ENCODE measurements at regions of chr5 and their contacts with region 1.

Region 1: DNA sequence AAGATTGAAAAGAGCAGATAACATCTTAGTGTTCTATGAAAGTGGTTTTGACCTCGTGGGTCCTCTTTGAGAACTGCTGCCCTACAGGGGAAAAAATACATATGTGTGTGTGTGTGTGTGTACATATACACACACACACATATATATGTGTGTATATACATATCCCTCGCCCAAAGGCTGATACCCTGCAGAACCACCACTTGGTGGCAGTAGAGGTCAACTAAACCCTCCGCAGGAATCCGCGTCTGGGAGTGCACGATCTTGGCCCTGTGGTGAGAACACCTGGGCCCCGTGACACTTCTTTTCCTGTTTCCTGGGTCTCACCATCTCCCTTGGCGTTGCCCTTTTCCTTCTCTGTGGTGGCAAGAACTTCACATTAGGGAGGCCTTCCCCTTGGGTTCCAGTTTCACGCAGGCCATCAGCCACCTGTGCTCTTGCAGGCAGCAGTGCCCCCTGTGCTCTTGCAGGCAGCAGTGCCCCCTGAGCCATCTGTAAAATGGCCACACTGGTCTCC is 8.2 kb downstream of the IL9 start:
- DNase-seq: peak; percentile 73
- ATAC-seq: peak; percentile 95
- H3K4me3 ChIP-seq: peak overlapping the region; percentile 32 to 61 (median 40); a peak in 4 of 6 replicates
- H3K27ac ChIP-seq: no peak overlapping the region
- H3K4me1 ChIP-seq: peaks cover 10% of the 10 kb centered on the region
- H3K27me3 ChIP-seq: peaks cover 0 to 5% of the 10 kb centered on the region in 2 experiments; a peak in 2 of 5 replicates
- CTCF ChIP-seq: peak; percentile 93
- EP300 ChIP-seq: no peak
- POLR2A ChIP-seq: no peak
- RAD21 ChIP-seq: peak; percentile 95

Region 2: DNA sequence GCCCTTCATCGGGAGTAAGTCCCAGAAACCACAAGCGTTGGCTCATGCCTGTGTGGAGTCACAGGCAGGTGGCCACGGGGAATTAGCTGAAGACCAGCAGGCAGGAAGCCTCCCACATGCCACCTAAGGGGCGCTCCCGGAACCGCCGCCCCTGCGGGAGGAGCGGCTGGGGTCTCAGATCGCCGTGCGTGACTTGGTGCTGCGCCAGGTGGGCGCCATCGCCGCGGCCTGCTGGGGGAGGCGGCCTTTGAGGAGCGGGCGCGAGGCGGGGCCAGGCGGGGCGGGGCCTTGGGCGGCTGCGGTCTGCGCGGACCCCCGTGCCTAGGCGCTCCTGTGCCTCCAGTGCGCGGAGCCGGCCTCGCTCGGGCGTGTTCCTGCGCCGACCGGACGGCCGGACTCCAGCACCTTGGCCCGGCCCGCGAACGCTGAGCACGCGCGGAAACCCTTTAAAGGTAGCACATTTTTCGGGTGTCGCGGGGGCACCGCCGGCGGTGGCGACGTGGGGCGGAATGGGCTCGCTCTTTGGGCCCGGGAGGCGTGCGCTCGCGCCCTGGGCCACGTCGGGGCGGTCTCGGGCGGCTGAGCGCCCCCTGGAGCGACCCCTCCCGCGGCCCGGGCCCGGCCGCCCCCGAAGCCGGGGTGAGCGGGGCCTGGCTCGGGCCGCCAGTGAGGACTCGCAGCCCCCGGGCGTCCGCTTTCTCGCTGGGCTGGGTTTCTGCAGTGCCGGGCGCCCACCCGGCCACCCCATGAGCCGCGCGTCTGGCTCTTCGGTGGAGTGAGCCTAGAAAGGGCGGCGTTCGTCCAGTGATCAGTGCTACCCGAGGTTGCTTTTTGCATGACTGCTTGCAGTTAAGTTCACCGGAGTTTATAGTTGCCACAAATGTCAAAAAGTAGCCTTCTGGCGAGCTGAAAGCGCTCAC is 42.9 kb after region 1 on chr5:
- CTCF ChIA-PET with region 1: no interaction called
- POLR2A ChIA-PET with region 1: no interaction called
- in situ Hi-C with region 1: no loop called
- intact Hi-C with region 1: loop called (anchors 2 kb)
- DNase-seq: peak; percentile 68
- ATAC-seq: peak; percentile 91
- H3K4me3 ChIP-seq: peak overlapping the region; percentile 70 to 92 (median 81)
- H3K27ac ChIP-seq: peak overlapping the region; percentile 62
- H3K4me1 ChIP-seq: peaks cover 16% of the 10 kb centered on the region
- H3K27me3 ChIP-seq: peaks cover 0 to 4% of the 10 kb centered on the region in 2 experiments; a peak in 3 of 5 replicates
- CTCF ChIP-seq: peak; percentile 45
- EP300 ChIP-seq: no peak
- POLR2A ChIP-seq: peak; percentile 53 to 77
- RAD21 ChIP-seq: peak; percentile 18; the same call in 1 of the 2 replicates

Region 3: DNA sequence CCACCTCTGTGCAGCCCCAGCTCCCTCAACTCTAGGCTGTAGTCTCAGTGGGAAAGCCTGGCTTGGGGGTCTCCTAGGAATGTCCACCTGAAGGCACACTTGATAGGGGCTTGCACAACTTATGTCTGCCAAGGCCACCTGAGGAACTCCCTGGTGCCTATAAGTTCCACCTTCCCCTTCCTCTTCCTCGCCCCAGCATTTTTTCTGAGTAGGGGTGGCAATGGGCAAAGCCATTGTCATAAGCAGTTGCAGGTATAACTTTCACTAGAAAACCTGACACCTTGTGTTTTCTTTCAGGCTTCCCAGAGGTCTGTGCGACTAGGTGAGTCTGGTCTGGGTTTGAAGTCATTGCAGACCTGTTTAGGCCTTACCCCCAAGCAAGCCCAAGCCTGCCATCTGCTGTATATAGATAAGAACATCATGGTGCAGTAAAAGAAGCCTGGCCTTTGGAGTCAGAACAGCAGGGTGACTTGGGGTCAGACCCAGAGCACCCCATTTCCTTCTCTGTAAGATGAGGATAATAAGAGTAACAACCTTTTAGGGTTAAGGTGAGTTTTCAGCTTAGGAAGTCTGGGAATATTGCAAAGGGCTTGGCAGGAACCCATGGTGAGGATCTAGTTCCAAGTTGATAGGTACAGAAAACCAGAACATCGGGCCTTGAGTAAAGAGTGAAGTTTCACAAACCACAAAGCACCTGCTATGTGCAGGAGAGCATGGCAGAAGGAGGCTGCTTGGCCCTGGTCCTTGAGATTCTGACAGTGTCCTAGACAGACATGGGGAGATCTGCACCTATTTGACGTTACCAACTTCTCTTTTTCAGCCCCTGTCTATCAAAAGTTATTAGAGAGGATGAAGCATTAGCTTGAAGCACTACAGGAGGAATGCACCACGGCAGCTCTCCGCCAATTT is 175.2 kb after region 1 on chr5:
- CTCF ChIA-PET with region 1: interaction called, 12 read pairs
- POLR2A ChIA-PET with region 1: no interaction called
- in situ Hi-C with region 1: no loop called
- intact Hi-C with region 1: loop called (anchors 2 kb)
- DNase-seq: peak; percentile 69
- ATAC-seq: peak; percentile 14
- H3K4me3 ChIP-seq: no peak overlapping the region
- H3K27ac ChIP-seq: peak overlapping the region; percentile 28
- H3K4me1 ChIP-seq: peaks cover 58% of the 10 kb centered on the region
- H3K27me3 ChIP-seq: no peaks in the 10 kb centered on the region
- CTCF ChIP-seq: peak; percentile 70
- EP300 ChIP-seq: no peak
- POLR2A ChIP-seq: no peak
- RAD21 ChIP-seq: peak; percentile 83

Region 4: DNA sequence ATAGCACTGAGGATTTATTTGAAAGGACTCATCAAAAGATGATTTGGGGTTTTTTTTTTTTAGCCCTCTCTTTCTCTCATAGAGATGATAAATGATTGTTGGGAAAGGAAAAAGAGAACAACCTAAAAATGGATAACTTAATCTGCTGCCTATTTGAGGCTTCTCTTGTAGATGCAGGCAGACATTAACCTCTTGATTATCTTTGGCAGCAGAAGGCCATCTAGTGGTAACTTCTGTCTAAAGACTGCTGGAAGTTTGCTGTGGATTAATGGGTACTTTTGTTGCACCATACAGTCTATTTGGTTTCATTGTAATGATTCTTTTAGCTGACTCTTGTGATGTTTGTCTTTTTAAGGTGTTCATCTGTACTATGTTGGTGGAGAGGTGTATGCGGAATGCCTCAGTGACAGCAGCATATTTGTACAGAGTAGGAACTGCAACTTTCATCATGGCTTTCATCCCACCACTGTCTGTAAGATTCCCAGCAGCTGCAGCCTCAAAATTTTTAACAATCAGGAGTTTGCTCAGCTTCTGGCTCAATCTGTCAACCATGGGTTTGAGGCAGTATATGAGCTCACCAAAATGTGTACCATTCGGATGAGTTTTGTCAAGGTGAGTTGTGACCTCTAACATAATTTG is 286.7 kb after region 1 on chr5:
- CTCF ChIA-PET with region 1: interaction called, 3 read pairs
- POLR2A ChIA-PET with region 1: no interaction called
- in situ Hi-C with region 1: no loop called
- intact Hi-C with region 1: loop called (anchors 1 kb)
- DNase-seq: peak; percentile 67
- ATAC-seq: peak; percentile 90
- H3K4me3 ChIP-seq: no peak overlapping the region
- H3K27ac ChIP-seq: no peak overlapping the region
- H3K4me1 ChIP-seq: no peaks in the 10 kb centered on the region
- H3K27me3 ChIP-seq: no peaks in the 10 kb centered on the region
- CTCF ChIP-seq: peak; percentile 72
- EP300 ChIP-seq: no peak
- POLR2A ChIP-seq: no peak
- RAD21 ChIP-seq: peak; percentile 54

Region 5: DNA sequence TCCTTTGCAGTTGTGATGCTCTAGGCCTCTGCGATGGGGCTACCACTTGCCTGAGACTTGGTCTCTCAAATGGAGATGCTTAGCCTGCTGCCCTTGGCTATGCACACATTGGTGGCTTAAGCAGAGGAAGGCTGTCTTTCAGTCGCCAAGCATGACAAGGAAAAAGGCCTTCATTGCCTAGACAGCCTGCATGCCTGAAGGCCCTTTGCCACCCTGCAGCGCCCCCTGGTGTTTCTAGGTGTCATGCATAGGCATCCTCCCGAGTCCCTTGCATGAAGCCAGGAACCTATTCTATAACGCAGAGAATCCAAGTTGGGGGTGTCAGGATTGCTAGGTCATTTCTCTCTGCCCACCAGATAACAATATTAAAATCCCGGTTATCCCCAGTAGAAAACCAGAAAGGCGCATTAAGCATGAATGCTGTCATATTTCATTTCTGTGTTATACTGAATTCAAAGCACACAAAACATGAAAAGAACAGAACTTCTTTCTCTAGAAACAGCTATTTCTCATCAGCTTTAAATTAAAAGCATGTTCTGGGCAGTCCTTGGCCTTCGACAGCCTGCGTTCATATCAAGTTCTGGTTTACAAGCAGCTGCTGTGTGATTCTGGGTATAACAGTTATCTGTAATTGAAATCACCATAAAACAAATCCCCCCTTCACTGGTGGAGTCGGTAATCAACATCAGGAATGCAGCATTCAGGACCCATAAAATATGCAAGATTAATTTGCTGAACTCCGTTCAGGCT is 537.6 kb after region 1 on chr5:
- CTCF ChIA-PET with region 1: no interaction called
- POLR2A ChIA-PET with region 1: no interaction called
- in situ Hi-C with region 1: no loop called
- intact Hi-C with region 1: loop called (anchors 2 kb)
- DNase-seq: peak; percentile 56
- ATAC-seq: peak; percentile 97
- H3K4me3 ChIP-seq: no peak overlapping the region
- H3K27ac ChIP-seq: no peak overlapping the region
- H3K4me1 ChIP-seq: no peaks in the 10 kb centered on the region
- H3K27me3 ChIP-seq: no peaks in the 10 kb centered on the region; a peak in 1 of 5 replicates
- CTCF ChIP-seq: peak; percentile 83
- EP300 ChIP-seq: no peak
- POLR2A ChIP-seq: no peak
- RAD21 ChIP-seq: peak; percentile 41; the same call in 1 of the 2 replicates

Measured in HepG2 (cell line).